CD14-positive monocyte (primary cell): ENCODE measurements at regions of chr1 and their contacts with region 1.

Region 1: GRCh38 chr1:247415423-247416361 is at the start of gene NLRP3:
- DNase-seq: peak; percentile 85 to 94 (median 89)
- H3K4me3 ChIP-seq: peak within 1 kb of the TSS; percentile 79 to 100 (median 96)
- H3K4me3 Mint-ChIP-seq: peak within 1 kb of the TSS; percentile 95 to 99
- H3K27ac ChIP-seq: peak within 1 kb of the TSS; percentile 89 to 96
- H3K27ac Mint-ChIP-seq: peak within 1 kb of the TSS; percentile 97 to 99 (median 98)
- H3K4me1 ChIP-seq: peaks cover 75 to 86% of the 10 kb centered on the region in 2 donors
- H3K4me1 Mint-ChIP-seq: peaks cover 69% of the 10 kb centered on the region
- H3K27me3 ChIP-seq: no peaks in the 10 kb centered on the region
- H3K27me3 Mint-ChIP-seq: peaks cover 0 to 3% (median 0%) of the 10 kb centered on the region in 3 donors
- CTCF ChIP-seq: no peak
- polyA plus RNA-seq, gene NLRP3: 56.2 to 400 (median 61.9) TPM

Region 2: GRCh38 chr1:247335882-247336281 is 79.8 kb before region 1 on chr1:
- intact Hi-C with region 1: no loop called
- DNase-seq: no peak
- H3K4me3 ChIP-seq: no peak overlapping the region
- H3K4me3 Mint-ChIP-seq: peak overlapping the region in 1 of 2 donors; percentile 40
- H3K27ac ChIP-seq: no peak overlapping the region
- H3K27ac Mint-ChIP-seq: no peak overlapping the region
- H3K4me1 ChIP-seq: peaks cover 17 to 28% of the 10 kb centered on the region in 2 donors
- H3K4me1 Mint-ChIP-seq: peaks cover 35% of the 10 kb centered on the region
- H3K27me3 ChIP-seq: peaks cover 0 to 6% of the 10 kb centered on the region in 2 donors
- H3K27me3 Mint-ChIP-seq: peaks cover 3 to 21% (median 13%) of the 10 kb centered on the region in 3 donors
- CTCF ChIP-seq: no peak

Region 3: GRCh38 chr1:247373721-247374141 is 42.0 kb before region 1 on chr1:
- intact Hi-C with region 1: loop called in 1 of 2 experiments (anchors 5 kb)
- DNase-seq: peak; percentile 44 to 59 (median 49)
- H3K4me3 ChIP-seq: peak overlapping the region; percentile 3 to 62 (median 18)
- H3K4me3 Mint-ChIP-seq: peak overlapping the region; percentile 33 to 58
- H3K27ac ChIP-seq: no peak overlapping the region
- H3K27ac Mint-ChIP-seq: no peak overlapping the region
- H3K4me1 ChIP-seq: peaks cover 5 to 9% of the 10 kb centered on the region in 2 donors
- H3K4me1 Mint-ChIP-seq: peaks cover 15% of the 10 kb centered on the region
- H3K27me3 ChIP-seq: no peaks in the 10 kb centered on the region
- H3K27me3 Mint-ChIP-seq: peaks cover 1 to 3% (median 2%) of the 10 kb centered on the region in 3 donors
- CTCF ChIP-seq: peak; percentile 65

Region 4: DNA sequence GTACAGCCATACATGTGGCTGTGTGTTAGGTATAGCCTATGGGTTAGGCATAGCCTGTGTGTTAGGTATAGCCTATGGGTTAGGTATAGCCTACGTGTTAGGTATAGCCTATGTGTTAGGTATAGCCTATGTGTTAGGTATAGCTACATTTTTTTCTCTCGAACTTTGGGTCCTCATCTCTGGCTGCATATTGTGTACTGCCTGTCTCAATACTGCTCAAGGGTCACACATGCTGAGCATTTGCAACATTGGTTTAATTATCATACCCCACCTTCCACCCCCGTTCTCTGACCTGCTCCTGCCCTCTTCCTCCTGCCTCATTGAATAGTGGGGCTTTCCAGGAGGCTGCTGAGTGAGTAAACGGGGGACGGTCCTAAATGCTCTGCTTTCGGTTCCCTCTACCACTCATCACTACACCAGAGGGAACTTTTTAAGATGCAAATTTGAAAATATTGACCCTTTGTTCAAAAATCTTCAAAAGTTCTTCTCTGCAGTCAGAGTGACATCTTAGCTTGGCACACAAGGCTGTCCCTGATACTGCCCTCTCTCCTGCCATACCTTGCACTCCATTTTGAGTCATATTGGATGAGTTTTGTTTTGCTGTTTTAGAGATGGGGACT is 24.4 kb after region 1 on chr1:
- intact Hi-C with region 1: loop called in 1 of 2 experiments (anchors 2 kb)
- DNase-seq: peak; percentile 82 to 90 (median 87)
- H3K4me3 ChIP-seq: no peak overlapping the region
- H3K4me3 Mint-ChIP-seq: peak overlapping the region in 1 of 2 donors; percentile 6
- H3K27ac ChIP-seq: peak overlapping the region; percentile 86 to 89
- H3K27ac Mint-ChIP-seq: peak overlapping the region; percentile 95 to 100 (median 98)
- H3K4me1 ChIP-seq: peaks cover 81 to 86% of the 10 kb centered on the region in 2 donors
- H3K4me1 Mint-ChIP-seq: peaks cover 91% of the 10 kb centered on the region
- H3K27me3 ChIP-seq: no peaks in the 10 kb centered on the region
- H3K27me3 Mint-ChIP-seq: peaks cover 0 to 5% (median 0%) of the 10 kb centered on the region in 3 donors
- CTCF ChIP-seq: no peak

Region 5: DNA sequence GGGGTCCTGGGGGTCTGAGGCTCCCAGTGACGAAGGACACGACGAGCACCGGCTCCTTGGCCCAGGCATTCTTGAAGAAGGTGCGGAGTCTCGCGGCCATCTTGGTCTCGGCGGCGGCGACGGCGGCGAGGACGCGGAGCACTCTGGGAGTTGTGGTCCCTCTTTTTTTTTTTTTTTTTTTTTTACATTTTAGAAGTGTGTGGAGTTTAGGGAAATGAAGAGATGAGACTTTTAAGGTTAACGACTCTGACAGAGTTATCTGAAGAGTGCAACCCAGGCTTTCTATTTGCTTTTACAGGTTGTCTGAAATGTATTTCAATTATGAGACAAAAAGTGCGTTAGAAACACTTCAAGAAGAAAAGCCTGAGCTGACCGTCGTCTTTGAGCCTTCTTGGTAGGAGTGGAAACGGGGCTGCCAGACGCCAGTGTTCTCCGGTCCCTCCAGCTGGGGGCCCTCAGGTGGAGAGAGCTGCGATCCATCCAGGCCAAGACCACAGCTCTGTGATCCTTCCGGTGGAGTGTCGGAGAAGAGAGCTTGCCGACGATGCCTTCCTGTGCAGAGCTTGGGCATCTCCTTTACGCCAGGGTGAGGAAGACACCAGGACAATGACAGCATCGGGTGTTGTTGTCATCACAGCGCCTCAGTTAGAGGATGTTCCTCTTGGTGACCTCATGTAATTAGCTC is 32.6 kb after region 1 on chr1:
- intact Hi-C with region 1: loop called in 1 of 2 experiments (anchors 5 kb)
- DNase-seq: peak in 1 of 3 donors; percentile 69
- H3K4me3 ChIP-seq: no peak overlapping the region
- H3K4me3 Mint-ChIP-seq: no peak overlapping the region
- H3K27ac ChIP-seq: no peak overlapping the region
- H3K27ac Mint-ChIP-seq: peak overlapping the region; percentile 44 to 99 (median 85)
- H3K4me1 ChIP-seq: peaks cover 39 to 52% of the 10 kb centered on the region in 2 donors
- H3K4me1 Mint-ChIP-seq: peaks cover 73% of the 10 kb centered on the region
- H3K27me3 ChIP-seq: no peaks in the 10 kb centered on the region
- H3K27me3 Mint-ChIP-seq: no peaks in the 10 kb centered on the region
- CTCF ChIP-seq: no peak

Region 6: GRCh38 chr1:247471445-247472016 is 55.8 kb after region 1 on chr1:
- intact Hi-C with region 1: no loop called
- DNase-seq: no peak
- H3K4me3 ChIP-seq: no peak overlapping the region
- H3K4me3 Mint-ChIP-seq: no peak overlapping the region
- H3K27ac ChIP-seq: no peak overlapping the region
- H3K27ac Mint-ChIP-seq: no peak overlapping the region
- H3K4me1 ChIP-seq: peaks cover 0 to 6% of the 10 kb centered on the region in 2 donors
- H3K4me1 Mint-ChIP-seq: peaks cover 5% of the 10 kb centered on the region
- H3K27me3 ChIP-seq: no peaks in the 10 kb centered on the region
- H3K27me3 Mint-ChIP-seq: peaks cover 0 to 9% (median 0%) of the 10 kb centered on the region in 3 donors
- CTCF ChIP-seq: no peak

Region 7: GRCh38 chr1:247638011-247638410 is 222.3 kb after region 1 on chr1:
- intact Hi-C with region 1: no loop called
- DNase-seq: no peak
- H3K4me3 ChIP-seq: no peak overlapping the region
- H3K4me3 Mint-ChIP-seq: no peak overlapping the region
- H3K27ac ChIP-seq: no peak overlapping the region
- H3K27ac Mint-ChIP-seq: no peak overlapping the region
- H3K4me1 ChIP-seq: peaks cover 7 to 12% of the 10 kb centered on the region in 2 donors
- H3K4me1 Mint-ChIP-seq: peaks cover 11% of the 10 kb centered on the region
- H3K27me3 ChIP-seq: no peaks in the 10 kb centered on the region
- H3K27me3 Mint-ChIP-seq: peaks cover 0 to 3% (median 0%) of the 10 kb centered on the region in 3 donors
- CTCF ChIP-seq: no peak